Prostate gland (tissue), 2 donors: ENCODE measurements at regions of chr11 and their contacts with region 1.

Region 1: GRCh38 chr11:120335908-120336640 is at the start of gene ARHGEF12:
- DNase-seq: peak; percentile 95
- H3K4me3 ChIP-seq: peak within 1 kb of the TSS; percentile 76 to 87
- H3K27ac ChIP-seq: peak within 1 kb of the TSS; percentile 95 to 97
- H3K4me1 ChIP-seq: no peaks in the 10 kb centered on the region
- H3K27me3 ChIP-seq: no peaks in the 10 kb centered on the region
- CTCF ChIP-seq: peak in 2 of 4 experiments; percentile 25 to 36
- POLR2A ChIP-seq: peak; percentile 60
- total RNA-seq, gene ARHGEF12: 86.2 to 96.5 TPM

Region 2: GRCh38 chr11:120375076-120375475 is 39.0 kb after region 1 on chr11:
- intact Hi-C with region 1: no loop called
- DNase-seq: no peak
- H3K4me3 ChIP-seq: no peak overlapping the region
- H3K27ac ChIP-seq: no peak overlapping the region
- H3K4me1 ChIP-seq: no peaks in the 10 kb centered on the region
- H3K27me3 ChIP-seq: no peaks in the 10 kb centered on the region
- CTCF ChIP-seq: no peak
- POLR2A ChIP-seq: no peak

Region 3: GRCh38 chr11:120400564-120401364 is 64.7 kb after region 1 on chr11:
- intact Hi-C with region 1: loop called (anchors 10 kb)
- DNase-seq: peak; percentile 41
- H3K4me3 ChIP-seq: no peak overlapping the region
- H3K27ac ChIP-seq: peak overlapping the region in 1 of 2 donors; percentile 17
- H3K4me1 ChIP-seq: peaks cover 2% of the 10 kb centered on the region
- H3K27me3 ChIP-seq: no peaks in the 10 kb centered on the region
- CTCF ChIP-seq: no peak
- POLR2A ChIP-seq: no peak

Region 4: DNA sequence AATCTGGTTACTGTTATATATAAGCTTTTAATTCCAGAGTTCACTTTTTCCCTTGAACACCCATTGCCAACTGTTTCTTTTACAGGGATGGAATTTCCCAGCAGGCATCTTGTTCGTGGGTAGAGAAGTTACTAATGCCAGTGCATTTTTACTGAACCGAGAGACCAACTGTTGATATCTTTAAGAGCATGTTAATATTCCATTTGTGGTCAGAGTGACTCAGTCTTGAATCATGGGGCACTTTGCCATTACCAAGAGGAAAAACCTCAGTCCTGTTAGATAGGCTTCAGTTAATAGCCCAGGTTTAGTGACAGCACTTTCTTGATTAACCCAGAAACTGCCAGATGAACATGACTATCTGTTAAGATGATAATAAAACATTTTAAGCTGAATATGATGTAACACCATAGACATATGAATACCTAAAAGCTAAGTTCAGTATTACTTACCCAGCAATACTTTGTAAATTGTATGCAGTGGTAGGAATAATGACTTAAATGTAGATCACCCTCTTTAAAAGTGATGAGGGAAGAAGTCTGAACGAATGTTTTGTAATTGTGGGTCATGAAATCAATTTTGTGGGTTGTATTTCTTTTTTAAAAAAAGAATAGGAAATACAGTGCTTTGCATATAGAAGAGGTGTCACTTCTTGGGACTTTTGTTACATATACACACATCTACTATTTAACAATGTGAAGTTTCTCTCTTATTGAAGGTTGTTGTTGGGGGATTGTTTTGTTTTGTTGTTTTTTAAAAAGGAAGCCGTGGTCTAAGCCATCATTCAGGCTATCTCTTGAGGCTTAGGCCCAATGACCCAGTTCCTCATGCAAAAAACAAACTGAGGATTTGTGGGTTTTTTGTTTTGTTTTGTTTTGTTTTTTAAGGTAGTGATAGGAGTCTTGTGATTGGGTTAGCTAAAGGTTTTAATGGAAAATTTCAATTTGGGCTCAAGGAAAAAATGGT is 96.3 kb after region 1 on chr11:
- intact Hi-C with region 1: loop called (anchors 5 kb)
- DNase-seq: peak; percentile 66
- H3K4me3 ChIP-seq: no peak overlapping the region
- H3K27ac ChIP-seq: peak overlapping the region in 1 of 2 donors; percentile 9
- H3K4me1 ChIP-seq: no peaks in the 10 kb centered on the region
- H3K27me3 ChIP-seq: no peaks in the 10 kb centered on the region
- CTCF ChIP-seq: no peak
- POLR2A ChIP-seq: no peak

Region 5: DNA sequence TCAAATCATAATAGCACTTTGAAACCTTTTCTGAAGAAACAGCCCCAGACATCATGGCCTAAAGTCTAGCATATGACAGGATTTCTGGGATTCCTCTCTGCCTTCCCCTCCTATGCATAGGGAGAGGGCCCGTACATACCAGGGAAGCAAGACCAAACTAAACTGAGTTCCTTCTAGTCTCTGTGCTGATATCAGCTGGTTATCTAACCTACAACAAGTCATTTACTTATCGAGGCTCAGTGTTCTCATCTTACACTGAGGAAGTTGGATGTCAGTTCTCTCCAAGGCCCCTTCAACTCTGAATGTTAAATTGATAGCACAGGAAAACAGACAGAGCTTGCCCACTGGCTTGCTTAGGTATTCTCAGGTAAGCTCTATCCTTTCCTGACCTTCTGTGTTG is 158.5 kb after region 1 on chr11:
- intact Hi-C with region 1: loop called (anchors 10 kb)
- DNase-seq: no peak
- H3K4me3 ChIP-seq: no peak overlapping the region
- H3K27ac ChIP-seq: no peak overlapping the region
- H3K4me1 ChIP-seq: no peaks in the 10 kb centered on the region
- H3K27me3 ChIP-seq: no peaks in the 10 kb centered on the region
- CTCF ChIP-seq: no peak
- POLR2A ChIP-seq: no peak

Region 6: GRCh38 chr11:120546312-120547205 is 210.5 kb after region 1 on chr11:
- intact Hi-C with region 1: no loop called
- DNase-seq: no peak
- H3K4me3 ChIP-seq: no peak overlapping the region
- H3K27ac ChIP-seq: peak overlapping the region; percentile 5 to 27
- H3K4me1 ChIP-seq: no peaks in the 10 kb centered on the region
- H3K27me3 ChIP-seq: no peaks in the 10 kb centered on the region
- CTCF ChIP-seq: no peak
- POLR2A ChIP-seq: no peak

Region 7: GRCh38 chr11:120682866-120683265 is 346.8 kb after region 1 on chr11:
- intact Hi-C with region 1: loop called (anchors 10 kb)
- DNase-seq: no peak
- H3K4me3 ChIP-seq: no peak overlapping the region
- H3K27ac ChIP-seq: no peak overlapping the region
- H3K4me1 ChIP-seq: no peaks in the 10 kb centered on the region
- H3K27me3 ChIP-seq: no peaks in the 10 kb centered on the region
- CTCF ChIP-seq: no peak
- POLR2A ChIP-seq: no peak

Region 8: DNA sequence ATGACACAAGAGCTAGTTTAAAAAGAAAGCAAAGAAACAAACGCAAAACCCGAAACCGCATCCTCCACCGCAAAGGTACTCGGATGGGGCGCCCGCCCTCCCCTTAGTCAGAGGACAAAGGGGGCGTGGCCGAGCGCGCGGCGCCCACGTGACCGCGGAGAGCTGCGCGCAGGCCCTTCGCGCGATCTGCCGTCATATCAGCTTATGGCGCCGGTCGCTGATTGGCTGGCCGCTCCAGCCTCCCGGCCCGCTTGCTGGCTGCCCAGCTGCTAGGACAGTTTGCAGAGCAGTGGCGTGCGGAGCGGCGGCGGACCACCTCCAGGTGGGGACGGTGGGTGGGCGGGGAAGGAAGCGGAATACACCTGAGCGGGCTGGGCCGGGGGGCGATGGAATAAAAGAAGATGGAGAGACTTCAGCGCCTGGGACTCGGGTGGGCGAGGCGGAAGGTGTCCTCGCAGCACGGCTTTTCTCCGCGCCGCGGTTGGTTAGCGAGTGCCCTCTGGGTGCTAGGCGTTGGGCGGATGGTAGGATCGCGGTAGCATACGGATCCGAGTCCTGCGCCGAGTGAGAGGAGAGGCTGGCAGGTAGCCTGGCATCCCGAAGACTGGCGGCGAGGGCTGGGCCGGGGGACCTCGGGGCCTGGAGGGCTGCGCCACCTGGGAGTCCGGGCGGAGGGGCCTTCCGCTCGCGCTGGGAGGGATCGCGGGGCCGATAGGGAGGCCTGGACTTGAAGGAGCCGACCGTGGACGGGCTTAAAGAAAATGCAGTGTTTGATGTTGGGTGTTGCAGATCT is 956.6 kb after region 1 on chr11 and contains the start of gene SC5D:
- intact Hi-C with region 1: loop called (anchors 5 kb)
- DNase-seq: peak; percentile 98
- H3K4me3 ChIP-seq: peak within 1 kb of the TSS; percentile 73 to 89
- H3K27ac ChIP-seq: peak within 1 kb of the TSS; percentile 93 to 99
- H3K4me1 ChIP-seq: no peaks in the 10 kb centered on the region
- H3K27me3 ChIP-seq: no peaks in the 10 kb centered on the region
- CTCF ChIP-seq: peak in 2 of 4 experiments; percentile 2 to 33
- POLR2A ChIP-seq: peak; percentile 97
- total RNA-seq, gene SC5D: 61.6 to 86.6 TPM